Posterior cingulate gyrus (tissue), 11 donors: ENCODE measurements at regions of chr14 and their contacts with region 1.

Region 1: DNA sequence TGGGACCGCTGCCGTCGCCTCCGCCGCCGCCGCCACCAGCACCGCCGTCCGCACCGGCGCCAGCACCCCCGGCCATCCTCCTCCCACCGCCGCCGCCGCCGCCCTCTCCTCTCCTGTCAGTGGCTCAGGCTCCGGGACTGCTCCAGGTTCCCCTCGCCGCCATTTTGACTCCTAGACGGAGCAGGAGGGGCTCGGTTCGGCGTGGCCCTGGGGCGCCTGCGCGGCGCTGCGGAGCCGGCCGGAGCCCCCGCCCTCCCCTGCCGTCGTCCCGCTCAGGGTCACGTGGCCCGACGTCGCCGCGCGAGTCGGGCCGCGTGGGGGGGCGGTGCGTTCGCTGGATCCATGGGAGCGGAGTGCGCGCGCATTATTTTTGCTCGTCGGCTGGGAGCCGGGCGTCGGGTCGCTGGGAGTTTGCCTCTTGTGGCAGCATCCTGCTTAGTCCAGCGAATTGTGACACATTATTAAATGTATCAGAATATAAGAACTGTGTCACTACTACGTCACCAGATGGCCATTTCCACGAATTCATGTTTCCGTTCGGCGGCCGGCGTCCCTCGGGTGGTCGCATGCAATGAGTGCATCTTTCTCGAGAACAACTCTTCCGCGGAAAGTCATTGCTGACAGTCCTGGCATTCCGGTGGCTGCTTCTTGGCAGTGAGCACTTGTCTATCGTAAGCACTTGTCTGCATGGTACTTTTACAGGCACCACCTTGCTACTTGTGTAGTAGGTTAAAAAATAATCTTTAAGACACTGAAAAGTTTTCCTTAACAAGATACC is at the start of gene BTBD7:
- DNase-seq: peak; percentile 87 to 99 (median 92)

Region 2: GRCh38 chr14:93184388-93185353 is 148.4 kb before region 1 on chr14 and contains the starts of genes LYSET and MOAP1:
- intact Hi-C with region 1: loop called (anchors 5 kb)
- DNase-seq: peak; percentile 77 to 98 (median 88)

Region 3: DNA sequence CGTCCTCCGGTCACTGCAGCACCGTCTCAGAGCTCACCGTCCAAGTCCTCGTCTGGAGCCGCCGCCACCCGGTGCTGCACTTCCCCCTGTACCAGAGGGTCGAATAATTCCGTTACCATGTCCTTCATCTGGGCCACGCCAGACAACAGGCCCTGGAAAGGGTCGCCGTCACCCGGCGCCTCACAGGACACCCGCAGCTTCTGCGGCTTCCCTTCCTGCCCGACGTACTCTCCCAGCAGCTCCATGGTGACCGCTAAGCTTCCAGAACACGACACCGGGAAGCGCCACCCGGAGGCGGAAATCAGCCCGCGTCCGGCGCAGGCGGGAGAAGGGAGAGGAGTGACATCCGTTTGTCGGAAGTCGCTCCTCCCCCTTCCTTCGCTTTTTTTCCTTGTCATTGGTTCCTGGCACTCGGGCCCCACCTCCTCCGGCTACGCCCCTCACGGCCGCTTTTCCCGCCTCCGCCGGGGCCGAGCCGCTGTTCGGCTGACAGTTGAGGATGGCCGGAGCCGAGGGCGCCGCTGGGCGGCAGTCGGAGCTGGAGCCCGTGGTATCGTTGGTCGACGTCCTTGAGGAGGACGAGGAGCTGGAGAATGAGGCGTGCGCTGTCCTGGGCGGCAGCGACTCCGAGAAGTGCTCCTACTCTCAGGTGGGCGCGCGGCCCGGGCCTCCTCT is 126.1 kb before region 1 on chr14 and contains the starts of genes GON7 and UBR7:
- intact Hi-C with region 1: loop called (anchors 1 kb)
- DNase-seq: peak; percentile 92 to 100 (median 96)

Region 4: GRCh38 chr14:93269341-93270068 is 63.5 kb before region 1 on chr14:
- intact Hi-C with region 1: loop called (anchors 5 kb)
- DNase-seq: peak; percentile 37 to 92 (median 52)

Region 5: GRCh38 chr14:93381644-93382043 is 48.6 kb after region 1 on chr14:
- intact Hi-C with region 1: loop called (anchors 10 kb)
- DNase-seq: no peak

Region 6: GRCh38 chr14:93431036-93431670 is 98.1 kb after region 1 on chr14:
- intact Hi-C with region 1: loop called (anchors 1 kb)
- DNase-seq: peak; percentile 58 to 97 (median 84)

Region 7: GRCh38 chr14:93533472-93534241 is 200.6 kb after region 1 on chr14:
- intact Hi-C with region 1: loop called (anchors 10 kb)
- DNase-seq: no peak